ENCODE measurements at regions of chr10 and their contacts with region 1.

Region 1: GRCh38 chr10:78972947-78973900 is 95.5 kb upstream of the ZMIZ1 start:
- DNase-seq: peak; percentile 97
- ATAC-seq: peak; percentile 72
- H3K4me3 ChIP-seq: peak overlapping the region; percentile 40 to 76 (median 59)
- H3K27ac ChIP-seq: peak overlapping the region; percentile 98
- H3K4me1 ChIP-seq: peaks cover 92% of the 10 kb centered on the region
- H3K27me3 ChIP-seq: no peaks in the 10 kb centered on the region
- CTCF ChIP-seq: peak; percentile 18; the same call in 1 of the 2 replicates
- EP300 ChIP-seq: peak; percentile 21 to 74; a peak in 2 of 4 replicates
- POLR2A ChIP-seq: peak in 1 of 2 experiments; percentile 80; a peak in 2 of 4 replicates
- RAD21 ChIP-seq: peak; percentile 65; the same call in 1 of the 2 replicates

Region 2: GRCh38 chr10:78852466-78853240 is 120.6 kb before region 1 on chr10:
- CTCF ChIA-PET with region 1: no interaction called
- POLR2A ChIA-PET with region 1: no interaction called
- in situ Hi-C with region 1: no loop called
- intact Hi-C with region 1: loop called (anchors 5 kb)
- DNase-seq: no peak
- ATAC-seq: peak; percentile 62
- H3K4me3 ChIP-seq: no peak overlapping the region
- H3K27ac ChIP-seq: no peak overlapping the region
- H3K4me1 ChIP-seq: peaks cover 12% of the 10 kb centered on the region
- H3K27me3 ChIP-seq: peaks cover 1 to 2% of the 10 kb centered on the region in 2 experiments; a peak in 3 of 5 replicates
- CTCF ChIP-seq: peak; percentile 24; the same call in 1 of the 2 replicates
- EP300 ChIP-seq: no peak
- POLR2A ChIP-seq: no peak
- RAD21 ChIP-seq: no peak

Region 3: GRCh38 chr10:78944723-78945312 is 28.4 kb before region 1 on chr10:
- CTCF ChIA-PET with region 1: no interaction called
- POLR2A ChIA-PET with region 1: interaction called, 24 read pairs
- in situ Hi-C with region 1: no loop called
- intact Hi-C with region 1: no loop called
- DNase-seq: no peak
- ATAC-seq: peak; percentile 52
- H3K4me3 ChIP-seq: no peak overlapping the region
- H3K27ac ChIP-seq: no peak overlapping the region
- H3K4me1 ChIP-seq: peaks cover 35% of the 10 kb centered on the region
- H3K27me3 ChIP-seq: no peaks in the 10 kb centered on the region
- CTCF ChIP-seq: no peak
- EP300 ChIP-seq: no peak
- POLR2A ChIP-seq: no peak
- RAD21 ChIP-seq: no peak

Region 4: GRCh38 chr10:79059859-79060379 is 86.7 kb after region 1 on chr10:
- CTCF ChIA-PET with region 1: no interaction called
- POLR2A ChIA-PET with region 1: interaction called, 66 read pairs
- in situ Hi-C with region 1: no loop called
- intact Hi-C with region 1: loop called (anchors 2 kb)
- DNase-seq: peak; percentile 86
- ATAC-seq: peak; percentile 68
- H3K4me3 ChIP-seq: peak overlapping the region; percentile 8 to 58 (median 27)
- H3K27ac ChIP-seq: peak overlapping the region; percentile 91
- H3K4me1 ChIP-seq: peaks cover 99% of the 10 kb centered on the region
- H3K27me3 ChIP-seq: no peaks in the 10 kb centered on the region
- CTCF ChIP-seq: no peak
- EP300 ChIP-seq: peak in 1 of 2 experiments; percentile 73; a peak in 1 of 4 replicates
- POLR2A ChIP-seq: peak in 1 of 2 experiments; percentile 49; a peak in 2 of 4 replicates
- RAD21 ChIP-seq: no peak

Region 5: GRCh38 chr10:79155301-79156081 is 182.3 kb after region 1 on chr10:
- CTCF ChIA-PET with region 1: no interaction called
- POLR2A ChIA-PET with region 1: interaction called, 13 read pairs
- in situ Hi-C with region 1: no loop called
- intact Hi-C with region 1: no loop called
- DNase-seq: no peak
- ATAC-seq: no peak
- H3K4me3 ChIP-seq: no peak overlapping the region
- H3K27ac ChIP-seq: peak overlapping the region; percentile 39
- H3K4me1 ChIP-seq: peaks cover 70% of the 10 kb centered on the region
- H3K27me3 ChIP-seq: no peaks in the 10 kb centered on the region
- CTCF ChIP-seq: no peak
- EP300 ChIP-seq: no peak
- POLR2A ChIP-seq: no peak
- RAD21 ChIP-seq: 0 out of 2 replicates have a peak, but pooled peaks have one; percentile 30